Activated CD8-positive, alpha-beta memory T cell treated with anti-CD3 and anti-CD28 coated beads, Interleukin-2, amount 10 ng/mL, durations not matched to agents 7 days and 5 days (primary cell): ENCODE measurements at regions of chr9 and their contacts with region 1.

Region 1: GRCh38 chr9:76458903-76459690 is at the start of gene GCNT1:
- DNase-seq: peak; percentile 95
- ATAC-seq: peak; percentile 97
- H3K4me3 Mint-ChIP-seq: peak within 1 kb of the TSS; percentile 89
- H3K27ac Mint-ChIP-seq: peak within 1 kb of the TSS; percentile 87
- H3K4me1 Mint-ChIP-seq: peaks cover 48% of the 10 kb centered on the region
- H3K27me3 Mint-ChIP-seq: no peaks in the 10 kb centered on the region
- total RNA-seq, gene GCNT1: 23.0 to 25.0 TPM

Region 2: GRCh38 chr9:76393963-76394679 is 65.0 kb before region 1 on chr9 and contains the start of gene RFK:
- CTCF ChIA-PET with region 1: interaction called, 12 read pairs
- DNase-seq: peak; percentile 91
- ATAC-seq: peak; percentile 92
- H3K4me3 Mint-ChIP-seq: peak within 1 kb of the TSS; percentile 94
- H3K27ac Mint-ChIP-seq: peak within 1 kb of the TSS; percentile 98
- H3K4me1 Mint-ChIP-seq: peaks cover 34% of the 10 kb centered on the region
- H3K27me3 Mint-ChIP-seq: no peaks in the 10 kb centered on the region
- total RNA-seq, gene RFK: 17.0 to 19.0 TPM

Region 3: GRCh38 chr9:76441551-76442322 is 17.4 kb before region 1 on chr9:
- CTCF ChIA-PET with region 1: interaction called, 28 read pairs
- DNase-seq: peak; percentile 74
- ATAC-seq: peak; percentile 87
- H3K4me3 Mint-ChIP-seq: peak overlapping the region; percentile 65
- H3K27ac Mint-ChIP-seq: peak overlapping the region; percentile 84
- H3K4me1 Mint-ChIP-seq: peaks cover 70% of the 10 kb centered on the region
- H3K27me3 Mint-ChIP-seq: no peaks in the 10 kb centered on the region

Region 4: GRCh38 chr9:76475686-76476085 is 16.6 kb after region 1 on chr9:
- CTCF ChIA-PET with region 1: interaction called, 11 read pairs
- DNase-seq: no peak
- ATAC-seq: no peak
- H3K4me3 Mint-ChIP-seq: no peak overlapping the region
- H3K27ac Mint-ChIP-seq: no peak overlapping the region
- H3K4me1 Mint-ChIP-seq: peaks cover 19% of the 10 kb centered on the region
- H3K27me3 Mint-ChIP-seq: no peaks in the 10 kb centered on the region

Region 5: GRCh38 chr9:76576344-76576743 is 117.2 kb after region 1 on chr9:
- CTCF ChIA-PET with region 1: interaction called, 11 read pairs
- DNase-seq: peak; percentile 96
- ATAC-seq: peak; percentile 83
- H3K4me3 Mint-ChIP-seq: peak overlapping the region; percentile 19
- H3K27ac Mint-ChIP-seq: peak overlapping the region; percentile 93
- H3K4me1 Mint-ChIP-seq: peaks cover 56% of the 10 kb centered on the region
- H3K27me3 Mint-ChIP-seq: no peaks in the 10 kb centered on the region

Region 6: DNA sequence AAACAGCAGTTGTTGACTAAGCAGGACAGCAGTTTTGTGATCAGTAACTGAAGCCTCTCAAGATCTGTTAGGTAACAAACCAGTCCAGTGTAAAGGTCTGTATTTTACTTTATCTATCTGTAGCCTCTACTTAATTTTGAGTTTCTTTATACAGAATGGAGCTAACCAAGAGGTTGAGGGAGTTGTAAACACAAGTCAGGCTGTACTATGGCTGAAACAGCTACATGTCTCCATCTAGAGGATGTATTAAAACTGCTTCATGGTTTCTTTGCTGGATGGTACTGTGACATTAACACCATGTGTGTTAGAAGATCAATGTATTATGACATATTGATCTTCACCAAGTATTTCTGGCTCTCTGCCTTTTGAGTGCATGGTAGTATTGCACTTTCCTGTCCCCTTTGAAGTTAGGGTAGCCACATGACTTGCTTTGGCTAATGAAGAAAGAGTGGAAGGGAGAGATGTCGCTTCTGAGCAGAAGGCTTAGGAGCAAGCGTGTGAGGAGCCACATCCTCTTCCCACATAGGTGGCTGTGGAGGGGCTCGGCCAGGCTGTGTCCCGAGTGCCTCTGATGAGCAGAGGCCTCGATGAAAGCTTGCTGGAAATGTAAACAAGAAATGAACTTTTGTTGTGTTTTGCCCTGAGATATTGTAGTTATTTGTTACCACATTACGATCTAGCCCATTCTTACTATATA is 199.6 kb after region 1 on chr9:
- CTCF ChIA-PET with region 1: interaction called, 120 read pairs
- DNase-seq: no peak
- ATAC-seq: peak; percentile 96
- H3K4me3 Mint-ChIP-seq: no peak overlapping the region
- H3K27ac Mint-ChIP-seq: no peak overlapping the region
- H3K4me1 Mint-ChIP-seq: peaks cover 63% of the 10 kb centered on the region
- H3K27me3 Mint-ChIP-seq: peaks cover 3% of the 10 kb centered on the region